ENCODE measurements at regions of chr3 and their contacts with region 1.

Region 1: DNA sequence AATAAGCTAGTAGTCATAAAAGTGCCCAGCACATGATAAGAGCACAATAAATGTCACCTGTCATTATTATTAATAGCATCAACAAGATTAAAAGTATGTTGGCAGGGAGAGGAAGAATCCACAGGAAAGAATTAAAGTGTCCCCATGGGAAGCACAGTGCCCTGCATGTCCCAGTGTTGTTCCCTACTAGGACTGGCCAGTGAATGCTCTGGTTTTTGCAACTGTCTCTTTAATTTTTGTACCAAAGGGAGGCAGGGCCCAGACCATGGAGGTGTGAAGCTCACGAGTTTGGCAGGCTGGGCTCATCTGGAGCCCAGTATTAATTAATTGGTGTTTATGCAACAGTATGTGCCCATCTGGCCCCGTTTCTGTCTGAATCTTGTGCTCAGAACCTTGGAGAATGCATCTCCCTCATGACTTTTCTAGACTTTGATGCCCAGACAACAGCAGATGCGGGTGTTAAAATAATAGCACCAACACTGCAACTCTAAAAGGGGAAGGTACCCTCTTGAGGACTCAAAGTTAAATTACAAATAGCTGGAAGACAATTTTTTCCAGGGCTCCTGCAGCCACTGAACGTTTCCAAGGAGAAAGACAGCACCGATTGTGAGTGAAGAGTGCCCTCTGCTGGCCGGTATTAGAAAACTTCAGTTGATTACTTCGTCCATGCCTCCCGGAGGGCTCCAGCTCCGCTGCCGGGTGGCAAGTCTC is 71.9 kb upstream of the SPATA12 start:
- DNase-seq: no peak
- H3K4me3 ChIP-seq: no peak overlapping the region
- CTCF ChIP-seq: peak; percentile 65

Region 2: GRCh38 chr3:56342475-56342874 is 646.1 kb before region 1 on chr3:
- CTCF ChIA-PET with region 1: interaction called, 21 read pairs
- POLR2A ChIA-PET with region 1: no interaction called
- DNase-seq: no peak
- H3K4me3 ChIP-seq: no peak overlapping the region
- CTCF ChIP-seq: no peak

Region 3: GRCh38 chr3:56693750-56694149 is 294.9 kb before region 1 on chr3:
- CTCF ChIA-PET with region 1: interaction called, 376 read pairs
- POLR2A ChIA-PET with region 1: no interaction called
- DNase-seq: no peak
- H3K4me3 ChIP-seq: no peak overlapping the region
- CTCF ChIP-seq: no peak

Region 4: DNA sequence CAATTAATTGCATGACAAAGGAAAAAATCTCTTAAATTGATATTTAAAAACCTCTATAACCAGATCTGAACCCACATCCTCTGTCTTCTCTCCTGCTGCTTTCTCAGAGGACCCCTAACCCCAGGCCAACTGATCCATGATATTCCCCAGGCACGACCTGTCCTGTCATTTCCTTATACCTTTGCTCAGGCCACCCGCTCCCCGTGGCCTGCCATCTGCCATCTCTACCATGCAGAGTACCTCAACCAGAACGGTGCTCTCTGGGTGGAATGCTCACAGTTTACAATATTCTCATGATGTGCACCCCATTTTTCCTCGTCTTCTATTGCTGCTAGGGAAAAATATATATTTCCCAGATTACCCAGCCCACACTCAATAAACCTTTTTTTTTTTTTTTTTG is 244.6 kb before region 1 on chr3:
- CTCF ChIA-PET with region 1: interaction called, 11 read pairs
- POLR2A ChIA-PET with region 1: no interaction called
- DNase-seq: no peak
- H3K4me3 ChIP-seq: no peak overlapping the region
- CTCF ChIP-seq: no peak

Region 5: DNA sequence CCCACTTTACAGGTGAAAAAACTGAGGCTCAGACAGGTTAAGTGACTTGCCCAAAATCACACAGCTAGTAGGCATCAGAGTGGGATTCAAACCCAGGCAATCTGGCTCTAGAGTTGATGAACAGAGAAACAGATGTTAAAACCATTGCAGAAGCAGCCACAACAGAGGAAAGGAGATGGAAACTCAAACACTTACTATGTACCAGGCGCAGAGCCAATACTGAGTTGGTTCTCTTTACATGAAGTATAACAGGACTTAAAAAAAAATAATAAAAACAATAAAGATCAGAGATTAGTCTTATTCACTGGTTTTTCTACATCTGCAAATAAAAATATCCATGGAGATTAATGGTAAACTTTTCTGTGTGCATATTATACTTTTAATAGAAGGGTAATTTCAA is 13.0 kb before region 1 on chr3:
- CTCF ChIA-PET with region 1: interaction called, 54 read pairs
- POLR2A ChIA-PET with region 1: no interaction called
- DNase-seq: no peak
- H3K4me3 ChIP-seq: no peak overlapping the region
- CTCF ChIP-seq: no peak

Region 6: DNA sequence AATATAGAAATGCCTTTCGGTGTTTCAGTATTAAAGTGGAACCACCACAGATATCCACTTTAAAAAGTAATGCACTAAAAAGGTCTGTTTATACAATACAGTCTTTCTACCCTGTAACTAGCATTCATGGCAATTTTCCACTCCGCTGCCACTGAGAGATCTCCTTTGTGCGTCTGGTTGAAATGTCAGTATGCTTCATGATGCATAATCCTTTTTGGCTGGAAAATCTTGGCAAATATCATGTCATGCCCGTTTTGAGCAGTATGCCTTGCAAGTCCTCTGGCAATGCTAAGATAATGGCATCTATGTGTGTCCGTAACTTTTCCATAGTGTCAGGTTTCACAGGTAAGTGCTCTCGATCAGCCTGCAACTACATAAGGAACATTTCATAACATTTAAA is 639.4 kb after region 1 on chr3:
- CTCF ChIA-PET with region 1: no interaction called
- POLR2A ChIA-PET with region 1: no interaction called
- DNase-seq: no peak
- H3K4me3 ChIP-seq: no peak overlapping the region
- CTCF ChIP-seq: no peak